Breast epithelium (tissue), 4 donors: ENCODE measurements at regions of chr5 and their contacts with region 1.

Region 1: DNA sequence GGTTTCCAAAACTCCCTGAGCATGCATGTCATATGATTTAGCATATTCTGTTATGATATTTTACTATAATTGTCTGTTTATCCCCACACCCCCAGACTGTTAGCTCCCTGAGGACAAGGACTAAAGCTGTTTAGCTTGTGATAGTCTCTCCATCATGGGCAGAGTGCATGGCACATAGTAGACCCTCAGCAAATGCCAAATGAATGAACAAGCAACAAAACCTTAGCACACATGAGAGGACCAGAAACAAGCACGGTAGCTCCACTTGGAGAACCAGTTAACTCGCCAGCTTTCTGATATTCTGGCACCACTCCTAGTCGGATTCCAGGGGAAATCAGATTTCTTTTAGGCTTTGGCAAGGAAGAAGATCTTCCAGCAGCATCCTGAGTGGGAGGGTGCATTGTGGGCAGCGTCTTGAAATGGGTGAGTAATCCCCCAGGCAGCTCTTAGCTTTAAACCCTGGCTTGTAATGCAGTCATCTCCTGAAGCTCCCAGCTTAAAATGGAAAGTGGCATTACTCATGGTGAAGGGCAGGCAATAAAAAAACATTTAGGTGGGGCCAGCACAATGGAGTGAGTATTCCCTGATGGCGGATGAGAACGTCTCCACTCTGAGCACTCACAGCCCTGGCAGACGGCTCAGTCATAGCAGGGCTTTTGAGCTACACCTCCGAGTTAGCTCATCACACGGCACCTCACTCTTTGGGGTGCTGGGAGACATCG is 41.1 kb downstream of the FGF1 start:
- DNase-seq: no peak
- H3K4me3 ChIP-seq: peak overlapping the region in 1 of 3 donors; percentile 45
- H3K27ac ChIP-seq: peak overlapping the region; percentile 48 to 78
- H3K4me1 ChIP-seq: peaks cover 0 to 6% of the 10 kb centered on the region in 2 donors
- H3K27me3 ChIP-seq: no peaks in the 10 kb centered on the region
- CTCF ChIP-seq: no peak
- POLR2A ChIP-seq: no peak

Region 2: GRCh38 chr5:143386725-143387124 is 741.9 kb after region 1 on chr5:
- intact Hi-C with region 1: loop called (anchors 10 kb)
- DNase-seq: no peak
- H3K4me3 ChIP-seq: no peak overlapping the region
- H3K27ac ChIP-seq: no peak overlapping the region
- H3K4me1 ChIP-seq: peaks cover 0 to 7% of the 10 kb centered on the region in 2 donors
- H3K27me3 ChIP-seq: no peaks in the 10 kb centered on the region
- CTCF ChIP-seq: no peak
- POLR2A ChIP-seq: no peak